A549 (cell line): ENCODE measurements at regions of chr19 and their contacts with region 1.

Region 1: DNA sequence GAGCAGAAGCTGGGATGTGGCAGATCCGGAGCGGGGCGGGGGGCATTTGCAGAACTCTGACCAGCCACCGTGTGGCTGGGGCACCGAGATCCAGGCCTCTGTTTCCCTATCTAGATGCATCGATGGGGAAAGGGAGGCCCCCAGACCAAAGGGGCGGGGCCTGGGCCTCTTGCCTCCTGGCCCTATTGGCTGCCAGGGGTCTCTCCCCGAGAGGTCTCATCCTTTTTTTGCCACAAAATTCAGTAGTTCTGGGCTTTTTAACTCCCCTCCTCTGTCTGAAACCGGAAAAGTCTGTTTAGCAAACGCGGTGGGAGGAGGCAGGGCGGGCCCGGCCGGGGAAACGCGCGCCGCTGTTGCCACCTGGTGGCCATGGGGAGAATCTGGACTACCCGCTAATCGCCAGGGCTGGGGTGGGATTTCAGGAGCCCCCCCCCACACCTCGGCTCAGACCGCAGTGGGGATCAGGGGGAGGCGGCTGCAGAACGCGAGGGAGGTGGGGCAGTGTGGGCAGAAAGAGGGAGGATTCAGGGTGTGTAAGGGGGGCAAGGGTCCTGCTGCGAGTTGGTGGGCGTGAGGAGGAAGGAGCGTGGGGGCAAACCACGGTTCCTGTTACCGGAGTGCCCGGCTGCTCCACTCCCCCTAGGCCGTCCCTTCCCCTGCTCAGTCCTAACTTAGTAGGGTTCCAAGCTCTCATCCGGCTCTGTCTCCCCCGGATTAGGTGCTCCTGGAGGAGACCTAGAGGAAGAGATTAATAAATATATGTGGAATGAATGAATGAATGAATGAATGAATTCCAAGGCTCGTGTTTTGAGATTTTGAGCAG is 28.3 kb downstream of the IL12RB1 start:
- DNase-seq: peak; percentile 55 to 68
- ATAC-seq: peak; percentile 80 to 91
- H3K4me3 ChIP-seq: peak overlapping the region; percentile 26; the same call in 1 of the 3 replicates
- H3K27ac ChIP-seq: peak overlapping the region; percentile 71 to 90
- H3K4me1 ChIP-seq: 0 out of 3 replicates have a peak, but pooled peaks cover 6% of the 10 kb centered on the region
- CTCF ChIP-seq: peak; percentile 72
- EP300 ChIP-seq: no peak
- POLR2A ChIP-seq: no peak
- RAD21 ChIP-seq: peak; percentile 88 to 90

Region 2: DNA sequence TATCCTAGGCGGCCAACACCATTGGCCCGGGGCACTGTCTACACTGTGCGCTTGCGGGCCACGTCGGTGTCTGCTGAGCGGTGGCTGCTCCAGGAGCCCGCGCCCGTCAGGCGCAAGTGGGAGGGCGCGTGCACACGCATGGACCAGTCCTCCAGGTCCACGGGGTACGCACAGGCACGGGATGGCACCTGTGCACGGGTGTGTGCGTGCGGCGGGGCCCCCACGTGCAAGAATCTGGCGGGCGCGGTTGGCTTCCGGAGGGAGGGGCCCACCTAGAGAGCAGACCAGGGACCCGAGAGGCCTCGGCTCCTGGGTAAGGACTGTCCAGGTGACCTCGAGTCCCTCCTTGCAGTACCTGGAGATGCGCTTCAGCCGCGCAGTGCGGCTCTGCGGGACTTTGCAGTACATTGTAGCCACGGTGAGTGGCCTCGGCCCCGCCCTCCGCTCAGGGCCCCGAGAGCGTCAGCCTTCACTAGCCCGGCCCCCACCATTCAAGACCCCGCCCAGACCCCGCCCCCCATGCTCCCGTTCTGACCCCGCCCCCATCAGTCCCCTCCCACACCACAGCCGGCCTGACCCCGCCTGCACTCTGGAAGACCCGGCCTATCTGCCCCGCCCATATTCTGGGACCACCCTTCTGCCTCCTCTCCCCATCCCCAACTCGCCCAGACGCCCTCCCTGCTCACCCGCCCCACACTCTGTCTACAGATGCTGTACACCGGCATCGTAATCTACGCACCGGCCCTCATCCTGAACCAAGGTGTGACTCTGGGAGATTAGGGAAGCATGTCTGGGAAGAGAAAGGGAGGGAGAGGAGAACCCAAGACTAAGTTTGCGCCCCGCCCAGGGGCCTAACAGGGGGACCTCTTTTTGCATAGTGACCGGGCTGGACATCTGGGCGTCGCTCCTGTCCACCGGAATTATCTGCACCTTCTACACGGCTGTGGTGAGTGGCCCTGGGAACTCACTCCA is 184.3 kb before region 1 on chr19:
- CTCF ChIA-PET with region 1: interaction called, 10 read pairs
- POLR2A ChIA-PET with region 1: no interaction called
- DNase-seq: peak; percentile 49 to 69
- ATAC-seq: peak; percentile 74 to 81
- H3K4me3 ChIP-seq: peak overlapping the region; percentile 52
- H3K27ac ChIP-seq: peak overlapping the region; percentile 65 to 80
- H3K4me1 ChIP-seq: no peaks in the 10 kb centered on the region
- CTCF ChIP-seq: no peak
- EP300 ChIP-seq: no peak
- POLR2A ChIP-seq: 0 out of 2 replicates have a peak, but pooled peaks have one; percentile 19
- RAD21 ChIP-seq: no peak

Region 3: GRCh38 chr19:18007044-18007916 is 51.1 kb before region 1 on chr19:
- CTCF ChIA-PET with region 1: interaction called, 136 read pairs
- POLR2A ChIA-PET with region 1: no interaction called
- DNase-seq: peak in 1 of 2 experiments; percentile 75
- ATAC-seq: peak; percentile 93 to 94
- H3K4me3 ChIP-seq: no peak overlapping the region
- H3K27ac ChIP-seq: peak overlapping the region; percentile 62 to 76; a peak in 5 of 6 replicates
- H3K4me1 ChIP-seq: peaks cover 30% of the 10 kb centered on the region
- CTCF ChIP-seq: peak; percentile 87
- EP300 ChIP-seq: no peak
- POLR2A ChIP-seq: no peak
- RAD21 ChIP-seq: peak; percentile 90

Region 4: GRCh38 chr19:18070181-18070580 is 11.8 kb after region 1 on chr19:
- CTCF ChIA-PET with region 1: interaction called, 10 read pairs
- POLR2A ChIA-PET with region 1: no interaction called
- DNase-seq: no peak
- ATAC-seq: no peak
- H3K4me3 ChIP-seq: no peak overlapping the region
- H3K27ac ChIP-seq: no peak overlapping the region
- H3K4me1 ChIP-seq: no peaks in the 10 kb centered on the region
- CTCF ChIP-seq: no peak
- EP300 ChIP-seq: no peak
- POLR2A ChIP-seq: no peak
- RAD21 ChIP-seq: no peak